ENCODE measurements at regions of chr17 and their contacts with region 1.

Region 1: DNA sequence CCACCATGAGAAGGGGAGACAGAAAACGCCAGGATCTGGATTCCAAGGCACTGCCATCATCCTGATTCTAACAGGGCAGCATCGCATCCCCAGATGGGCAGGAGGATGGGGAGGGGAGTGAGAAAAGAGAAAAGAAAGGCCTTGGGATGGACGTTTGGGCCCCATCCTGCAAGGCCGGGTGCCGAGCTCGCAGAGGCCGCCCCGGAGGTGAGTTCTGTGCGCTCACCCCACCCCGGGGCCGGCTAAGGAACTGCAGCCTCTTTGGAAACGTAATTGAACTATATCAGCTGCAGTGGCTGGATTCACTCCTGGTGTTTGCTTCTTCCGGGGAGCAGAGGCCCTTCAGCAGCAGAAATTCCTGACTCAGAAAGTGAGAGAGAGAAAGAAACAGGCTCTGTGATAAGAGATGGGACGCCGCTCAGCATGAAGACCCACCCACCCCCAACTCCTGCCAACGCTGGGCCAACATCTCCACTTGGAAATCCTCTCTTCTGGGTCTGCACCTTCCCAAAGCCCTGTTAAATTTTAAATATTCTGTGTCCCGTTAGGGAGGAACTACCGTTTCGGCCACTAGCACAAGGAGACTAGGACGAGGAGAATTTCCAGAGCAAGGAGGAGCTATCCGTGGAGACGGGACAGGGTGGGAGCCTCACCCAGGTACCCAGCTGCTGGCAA is 8.5 kb upstream of the SSTR2 start:
- DNase-seq: peak; percentile 65
- ATAC-seq: peak; percentile 92
- H3K4me3 Mint-ChIP-seq: no peak overlapping the region
- H3K27ac Mint-ChIP-seq: no peak overlapping the region
- H3K4me1 Mint-ChIP-seq: peaks cover 6% of the 10 kb centered on the region
- H3K27me3 Mint-ChIP-seq: peaks cover 25% of the 10 kb centered on the region

Region 2: DNA sequence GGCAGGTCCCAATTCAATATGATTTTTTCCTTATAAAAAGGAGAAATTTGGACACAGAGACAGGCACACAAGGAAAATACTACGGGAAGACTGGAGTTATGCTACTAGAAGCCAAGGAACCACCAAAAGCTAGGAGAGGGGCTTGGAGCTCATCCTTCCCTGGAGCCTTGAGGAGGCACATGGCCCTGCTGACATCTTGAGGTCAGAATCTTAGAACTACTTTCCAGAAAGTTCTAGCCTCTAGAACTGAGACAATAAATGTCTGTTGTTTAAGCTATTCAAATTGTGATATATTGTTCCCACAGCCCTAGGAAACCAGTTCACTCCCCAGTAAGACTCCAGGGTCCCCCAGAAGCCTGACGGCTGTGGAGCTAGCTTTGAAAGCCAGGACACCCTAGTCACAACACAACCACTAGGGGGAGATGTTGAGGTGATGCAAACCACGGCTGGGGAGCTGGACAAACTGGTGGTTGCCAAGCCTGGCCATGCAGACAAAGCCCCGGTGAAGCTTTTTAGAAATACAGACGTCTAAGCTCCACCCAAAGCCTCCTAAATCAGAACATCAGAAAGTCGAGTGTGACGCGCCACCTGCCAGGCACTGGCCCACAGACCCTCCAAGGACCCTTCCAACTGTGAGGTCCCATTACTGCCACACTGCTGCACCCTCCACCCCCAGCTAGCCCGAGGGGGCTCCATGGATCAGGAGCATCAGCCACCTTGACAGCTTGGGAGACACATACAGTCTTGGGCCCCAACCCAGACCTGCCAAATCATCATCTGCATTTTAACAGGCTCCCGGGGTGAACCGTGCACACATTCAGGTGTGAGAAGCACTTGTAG is 170.2 kb before region 1 on chr17:
- CTCF ChIA-PET with region 1: interaction called, 23 read pairs
- DNase-seq: peak; percentile 67
- ATAC-seq: peak; percentile 71
- H3K4me3 Mint-ChIP-seq: no peak overlapping the region
- H3K27ac Mint-ChIP-seq: no peak overlapping the region
- H3K4me1 Mint-ChIP-seq: peaks cover 7% of the 10 kb centered on the region
- H3K27me3 Mint-ChIP-seq: no peaks in the 10 kb centered on the region

Region 3: GRCh38 chr17:73170324-73170723 is 14.0 kb after region 1 on chr17:
- CTCF ChIA-PET with region 1: no interaction called
- DNase-seq: no peak
- ATAC-seq: no peak
- H3K4me3 Mint-ChIP-seq: no peak overlapping the region
- H3K27ac Mint-ChIP-seq: no peak overlapping the region
- H3K4me1 Mint-ChIP-seq: peaks cover 23% of the 10 kb centered on the region
- H3K27me3 Mint-ChIP-seq: peaks cover 40% of the 10 kb centered on the region

Region 4: DNA sequence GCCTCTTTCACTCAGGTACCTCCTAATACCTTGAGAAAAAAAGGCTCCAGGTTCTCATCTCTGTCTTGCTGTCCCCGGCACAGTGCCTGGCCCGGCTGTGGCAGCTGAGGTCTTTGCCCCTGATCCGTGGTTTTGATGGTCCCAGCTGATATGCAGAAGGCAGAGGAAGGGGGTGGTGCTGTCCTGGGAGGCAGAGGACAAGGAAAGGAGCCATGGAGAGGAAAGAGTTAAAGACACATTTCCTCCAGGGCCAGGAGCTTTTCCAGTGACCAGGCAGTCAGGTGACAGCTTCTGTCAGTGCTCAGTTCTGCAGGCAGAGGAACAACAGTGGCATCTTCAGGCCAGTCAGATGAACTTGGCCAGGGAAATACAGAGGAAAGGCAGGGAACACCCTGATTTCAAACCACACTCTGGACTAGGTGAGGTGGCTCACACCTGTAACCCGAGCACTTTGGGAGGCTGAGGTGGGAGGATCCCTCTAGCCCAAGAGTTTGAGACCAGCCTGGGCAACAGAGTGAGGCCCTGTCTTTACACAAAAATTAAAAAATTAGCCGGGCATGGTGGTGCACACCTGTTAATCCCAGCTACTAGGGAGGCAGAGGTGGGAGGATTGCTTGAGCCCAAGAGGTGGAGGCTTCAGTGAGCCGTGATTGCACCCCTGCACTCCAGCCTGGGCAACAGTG is 33.3 kb after region 1 on chr17:
- CTCF ChIA-PET with region 1: no interaction called
- DNase-seq: no peak
- ATAC-seq: no peak
- H3K4me3 Mint-ChIP-seq: no peak overlapping the region
- H3K27ac Mint-ChIP-seq: no peak overlapping the region
- H3K4me1 Mint-ChIP-seq: peaks cover 21% of the 10 kb centered on the region
- H3K27me3 Mint-ChIP-seq: no peaks in the 10 kb centered on the region